Activated naive CD4-positive, alpha-beta T cell treated with anti-CD3 and anti-CD28 coated beads for 36 hours (primary cell): ENCODE measurements at regions of chr1 and their contacts with region 1.

Region 1: GRCh38 chr1:62436466-62437256 is at the start of gene USP1:
- DNase-seq: peak; percentile 99
- H3K4me3 Mint-ChIP-seq: peak within 1 kb of the TSS; percentile 82
- H3K27ac Mint-ChIP-seq: peak within 1 kb of the TSS; percentile 99
- H3K4me1 Mint-ChIP-seq: peaks cover 30% of the 10 kb centered on the region
- H3K27me3 Mint-ChIP-seq: no peaks in the 10 kb centered on the region
- total RNA-seq, gene USP1: 65.9 to 67.1 TPM

Region 2: DNA sequence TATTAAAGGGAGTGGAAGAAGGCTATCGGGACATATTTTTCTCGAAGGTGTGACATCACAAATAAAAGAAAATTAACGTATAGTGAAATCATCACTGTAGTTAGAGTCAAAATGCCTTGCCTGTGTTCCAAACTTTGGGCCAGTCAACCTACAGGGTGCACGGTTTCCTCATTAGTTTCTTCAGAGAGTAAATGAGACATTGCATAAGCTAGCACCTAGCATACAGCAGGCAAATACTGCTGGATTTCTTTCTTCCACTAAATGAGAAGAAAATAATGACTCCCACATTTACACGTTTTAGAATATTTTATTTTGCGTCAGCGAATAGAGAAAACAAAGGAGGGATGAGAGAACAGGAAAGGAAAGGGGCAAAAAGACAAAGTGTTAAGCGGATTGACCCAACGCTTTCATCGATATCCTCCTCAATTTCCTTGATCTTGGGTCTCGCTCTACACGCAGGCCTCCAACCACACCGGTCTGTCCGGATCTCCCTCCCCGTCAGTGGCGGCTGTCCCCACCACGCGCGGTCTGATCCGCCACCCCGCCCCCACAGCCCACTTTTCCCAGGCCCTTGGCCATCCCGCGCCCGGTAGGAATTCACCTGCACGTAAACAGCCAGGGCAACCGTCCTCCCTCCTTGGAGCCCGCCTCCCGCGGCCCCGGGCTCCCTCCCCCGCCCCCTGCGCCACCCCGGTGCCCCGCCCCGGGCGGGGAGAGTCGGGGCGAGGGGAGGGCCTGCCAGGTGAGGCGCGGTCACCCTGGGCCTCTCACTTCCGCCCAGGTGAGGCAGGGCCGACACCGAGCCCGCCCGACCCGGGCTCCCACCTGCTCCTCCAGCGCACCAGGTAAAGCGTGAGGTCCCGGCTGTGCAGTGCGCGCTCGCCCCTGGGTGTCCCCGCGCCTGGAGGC is 694.7 kb before region 1 on chr1 and contains the start of gene PATJ:
- CTCF ChIA-PET with region 1: no interaction called
- intact Hi-C with region 1: loop called (anchors 1 kb)
- DNase-seq: peak; percentile 65
- H3K4me3 Mint-ChIP-seq: peak within 1 kb of the TSS; percentile 93
- H3K27ac Mint-ChIP-seq: peak within 1 kb of the TSS; percentile 83
- H3K4me1 Mint-ChIP-seq: peaks cover 20% of the 10 kb centered on the region
- H3K27me3 Mint-ChIP-seq: no peaks in the 10 kb centered on the region
- total RNA-seq, gene PATJ: 13.3 to 13.5 TPM

Region 3: DNA sequence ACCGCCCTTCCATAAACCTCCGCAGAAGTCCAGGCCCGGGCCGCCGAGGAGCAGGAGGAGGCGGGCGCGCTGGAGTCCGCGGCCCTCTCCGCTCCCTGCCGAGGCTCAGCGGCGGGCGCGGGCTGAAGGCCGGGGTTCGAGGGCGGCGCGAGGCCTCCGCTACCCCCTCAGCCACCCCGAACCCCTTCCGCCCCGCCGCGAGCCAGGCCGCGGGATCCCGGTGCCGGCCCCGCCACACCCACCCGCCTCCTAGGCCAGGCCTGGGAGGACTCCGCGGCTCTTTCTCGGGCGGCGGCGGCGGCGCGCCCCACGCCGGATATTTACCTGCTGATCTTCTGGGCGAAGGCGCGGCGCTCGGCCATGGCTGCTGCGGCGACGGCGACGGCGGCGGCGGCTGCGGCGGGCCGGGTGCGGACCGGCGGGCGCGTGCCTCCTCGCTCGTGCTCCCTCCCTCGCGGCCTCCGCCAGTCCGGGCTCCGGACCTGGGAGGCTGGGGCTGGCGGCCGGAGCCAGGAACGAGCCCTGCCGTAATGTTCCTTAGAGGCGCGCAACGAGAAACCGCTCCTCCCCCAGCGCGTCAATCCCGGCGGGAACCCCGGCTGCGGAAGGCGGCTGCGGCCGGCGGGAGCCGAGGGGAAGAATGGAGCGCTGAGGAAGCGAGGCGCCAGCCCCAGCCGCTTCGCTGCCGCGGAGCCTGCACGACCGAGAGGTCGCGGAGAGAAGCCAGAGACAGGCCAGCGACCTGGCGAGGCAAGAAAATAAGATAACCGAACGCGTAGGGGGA is 251.4 kb after region 1 on chr1 and contains the start of gene DOCK7:
- CTCF ChIA-PET with region 1: no interaction called
- intact Hi-C with region 1: loop called (anchors 1 kb)
- DNase-seq: peak; percentile 56
- H3K4me3 Mint-ChIP-seq: peak within 1 kb of the TSS; percentile 86
- H3K27ac Mint-ChIP-seq: peak within 1 kb of the TSS; percentile 60
- H3K4me1 Mint-ChIP-seq: peaks cover 26% of the 10 kb centered on the region
- H3K27me3 Mint-ChIP-seq: peaks cover 3% of the 10 kb centered on the region
- total RNA-seq, gene DOCK7: 7.7 to 10.0 TPM

Region 4: DNA sequence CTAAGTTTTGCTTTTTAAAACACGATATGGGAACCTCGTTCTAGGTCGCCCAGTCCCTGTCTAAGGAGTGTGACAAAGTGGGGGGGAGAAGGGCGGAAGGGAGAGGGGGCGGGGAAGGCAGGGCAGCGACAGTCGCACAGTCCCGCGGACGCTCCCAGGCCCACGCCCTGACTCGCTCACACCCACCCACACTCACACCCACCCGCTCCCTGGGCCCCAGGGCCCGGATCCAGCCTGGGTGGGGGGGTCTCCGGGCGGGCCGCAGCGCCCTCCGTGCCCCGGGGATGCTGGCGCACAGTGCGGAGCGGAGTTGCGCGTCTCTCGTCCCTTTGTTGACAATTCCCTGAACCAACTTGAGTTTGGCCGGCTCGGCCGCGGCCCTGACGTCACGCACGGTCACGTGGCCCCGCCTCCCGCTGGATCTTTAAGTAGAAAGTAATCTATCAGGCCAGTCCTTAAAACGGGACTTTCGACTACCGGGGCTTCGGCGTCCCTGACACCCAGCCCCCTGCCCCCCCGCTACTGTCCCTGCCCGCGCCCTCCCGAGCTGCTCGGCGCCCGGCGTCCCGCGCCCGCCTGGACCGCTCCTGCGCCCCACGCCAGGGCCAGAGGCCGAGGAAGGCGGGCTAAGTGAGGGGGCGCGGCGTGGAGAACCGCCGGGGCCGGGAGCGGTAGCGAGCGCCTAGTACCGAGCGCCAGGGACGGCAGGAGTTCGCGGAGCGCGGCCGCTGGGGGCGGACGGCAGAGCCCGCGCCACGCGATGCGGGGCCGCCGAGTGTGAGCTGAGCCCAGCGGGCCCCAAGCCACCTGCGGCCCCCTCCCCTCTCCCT is 885.7 kb after region 1 on chr1 and contains the start of gene FOXD3:
- CTCF ChIA-PET with region 1: no interaction called
- intact Hi-C with region 1: loop called (anchors 5 kb)
- DNase-seq: peak; percentile 44
- H3K4me3 Mint-ChIP-seq: peak within 1 kb of the TSS; percentile 77
- H3K27ac Mint-ChIP-seq: peak within 1 kb of the TSS; percentile 54
- H3K4me1 Mint-ChIP-seq: peaks cover 44% of the 10 kb centered on the region
- H3K27me3 Mint-ChIP-seq: peaks cover 71% of the 10 kb centered on the region
- total RNA-seq, gene FOXD3: not detected

Region 5: DNA sequence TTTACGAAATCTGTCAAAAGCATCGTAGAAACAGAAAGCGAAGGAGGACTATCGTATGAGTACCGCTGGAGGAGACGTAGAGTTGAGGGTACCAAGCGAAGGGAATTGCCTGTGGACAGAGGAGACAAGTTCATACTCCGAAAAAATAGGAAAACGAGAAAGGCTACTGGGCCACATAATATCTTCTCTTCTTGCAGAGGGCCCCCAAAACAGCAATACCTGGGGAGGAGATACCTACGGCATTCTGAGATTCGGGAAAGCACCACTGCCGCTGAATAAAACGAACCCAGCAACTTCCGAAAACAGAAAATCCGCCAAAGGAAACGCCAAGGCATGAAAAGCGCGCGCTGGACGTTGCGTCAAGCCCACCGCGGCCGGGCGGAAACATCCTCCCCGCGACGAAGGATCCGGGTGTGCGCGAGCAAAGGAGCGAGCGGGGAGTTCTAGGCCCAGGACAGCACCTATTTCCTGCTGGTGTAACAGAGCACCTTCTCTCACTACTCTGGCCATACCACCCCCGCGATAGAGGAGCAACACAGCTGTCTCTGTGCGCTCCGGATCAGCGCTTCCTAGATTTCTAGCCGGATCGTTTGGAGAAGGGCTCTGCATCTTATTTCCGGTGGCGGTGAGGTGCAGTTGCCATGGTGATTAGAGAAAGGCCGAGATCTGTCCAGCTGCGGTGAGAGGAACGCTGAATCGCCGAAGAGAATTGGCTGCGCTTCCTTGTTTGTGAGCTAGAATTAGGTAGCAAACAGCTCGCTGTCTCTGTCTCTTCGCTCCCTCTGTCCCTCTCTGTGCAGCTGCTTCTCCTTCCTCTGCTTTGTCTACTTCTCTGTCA is 1086.4 kb after region 1 on chr1 and contains the starts of genes EFCAB7 and ITGB3BP:
- CTCF ChIA-PET with region 1: no interaction called
- intact Hi-C with region 1: loop called (anchors 2 kb)
- DNase-seq: peak; percentile 86
- H3K4me3 Mint-ChIP-seq: peak within 1 kb of the TSS; percentile 97
- H3K27ac Mint-ChIP-seq: peak within 1 kb of the TSS; percentile 95
- H3K4me1 Mint-ChIP-seq: peaks cover 24% of the 10 kb centered on the region
- H3K27me3 Mint-ChIP-seq: no peaks in the 10 kb centered on the region
- total RNA-seq, gene EFCAB7: 6.3 to 6.4 TPM
- total RNA-seq, gene ITGB3BP: 59.1 to 59.7 TPM